ENCODE measurements at regions of chr12 and their contacts with region 1.

Region 1: GRCh38 chr12:10673660-10674384 is at the start of gene STYK1:
- DNase-seq: peak; percentile 86
- H3K4me3 Mint-ChIP-seq: peak within 1 kb of the TSS; percentile 68
- H3K27ac Mint-ChIP-seq: no peak within 1 kb of the TSS
- H3K4me1 Mint-ChIP-seq: peaks cover 20% of the 10 kb centered on the region
- H3K27me3 Mint-ChIP-seq: peaks cover 34% of the 10 kb centered on the region
- total RNA-seq, gene STYK1: not detected

Region 2: DNA sequence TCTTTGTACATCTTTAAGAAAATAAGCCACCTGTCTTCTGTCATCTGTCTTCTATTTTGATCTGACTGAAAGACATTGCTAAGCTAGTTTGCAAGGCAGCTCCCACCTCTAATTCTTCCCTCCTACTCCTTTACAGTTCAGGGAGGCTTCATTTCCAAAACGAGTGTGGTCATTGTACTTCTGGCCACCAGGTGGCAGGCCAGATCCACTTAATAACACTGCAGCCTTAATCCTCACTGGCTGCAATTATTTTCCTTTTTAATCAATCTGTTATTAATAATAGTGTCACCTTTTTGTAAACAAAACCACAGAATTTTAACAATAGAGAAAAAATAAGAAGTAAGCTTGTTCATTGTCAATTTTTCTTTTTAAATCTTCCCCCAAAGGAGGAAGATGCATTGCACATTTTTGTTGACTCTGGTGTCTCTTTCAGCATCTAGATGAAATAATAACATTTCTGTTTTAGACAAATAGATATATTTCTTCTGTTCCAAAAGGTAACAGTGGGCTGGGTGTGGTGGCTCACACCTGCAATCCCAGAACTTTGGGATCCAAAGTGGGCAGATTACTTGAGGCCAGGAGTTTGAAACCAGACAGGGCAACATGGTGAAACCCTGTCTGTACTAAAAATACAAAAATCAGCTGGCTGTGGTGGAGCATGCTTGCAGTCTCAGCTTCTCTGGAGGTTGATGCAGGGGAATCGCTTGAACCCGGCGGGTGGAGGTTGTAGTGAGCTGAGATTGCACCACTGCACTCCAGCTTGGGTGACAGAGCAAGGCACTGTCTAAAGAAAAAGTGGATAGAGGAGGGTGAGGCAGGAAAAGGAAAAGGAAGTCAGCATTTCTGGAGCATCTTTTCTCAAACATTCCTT is 437.8 kb before region 1 on chr12:
- CTCF ChIA-PET with region 1: interaction called, 3 read pairs
- intact Hi-C with region 1: loop called (anchors 1 kb)
- DNase-seq: peak; percentile 43
- H3K4me3 Mint-ChIP-seq: no peak overlapping the region
- H3K27ac Mint-ChIP-seq: no peak overlapping the region
- H3K4me1 Mint-ChIP-seq: no peaks in the 10 kb centered on the region
- H3K27me3 Mint-ChIP-seq: no peaks in the 10 kb centered on the region

Region 3: GRCh38 chr12:10331642-10332239 is 342.1 kb before region 1 on chr12:
- CTCF ChIA-PET with region 1: no interaction called
- intact Hi-C with region 1: loop called (anchors 1 kb)
- DNase-seq: no peak
- H3K4me3 Mint-ChIP-seq: no peak overlapping the region
- H3K27ac Mint-ChIP-seq: no peak overlapping the region
- H3K4me1 Mint-ChIP-seq: no peaks in the 10 kb centered on the region
- H3K27me3 Mint-ChIP-seq: peaks cover 4% of the 10 kb centered on the region

Region 4: DNA sequence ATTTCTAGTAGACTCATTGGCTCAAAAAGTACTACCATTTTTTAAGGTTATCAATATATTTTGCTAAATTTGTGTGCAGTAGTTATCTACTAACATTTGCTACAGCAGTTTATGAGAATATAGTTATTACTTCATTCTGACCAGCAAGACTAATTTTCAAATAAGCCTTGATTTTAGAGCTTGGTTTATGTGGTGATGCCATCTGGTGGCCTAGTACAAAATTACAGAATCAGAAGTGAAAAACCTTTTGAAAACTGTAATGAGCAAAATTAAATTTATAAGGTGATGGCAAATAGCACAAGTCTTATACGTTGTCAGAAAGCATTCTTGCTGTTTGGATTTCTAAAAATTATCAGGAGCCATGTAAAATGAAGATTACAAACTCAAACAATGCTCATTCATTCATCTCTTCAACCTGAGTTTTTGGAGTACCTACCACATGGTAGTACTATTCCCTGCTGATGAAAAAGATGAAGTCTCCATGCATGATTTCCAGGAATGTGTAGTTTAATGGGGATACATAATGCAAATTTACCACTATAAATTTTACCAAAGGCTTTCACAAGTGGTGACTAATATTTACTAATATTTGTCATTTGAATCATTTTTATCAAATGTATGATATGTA is 111.4 kb before region 1 on chr12:
- CTCF ChIA-PET with region 1: no interaction called
- intact Hi-C with region 1: loop called (anchors 1 kb)
- DNase-seq: peak; percentile 36
- H3K4me3 Mint-ChIP-seq: no peak overlapping the region
- H3K27ac Mint-ChIP-seq: no peak overlapping the region
- H3K4me1 Mint-ChIP-seq: peaks cover 5% of the 10 kb centered on the region
- H3K27me3 Mint-ChIP-seq: peaks cover 15% of the 10 kb centered on the region

Region 5: DNA sequence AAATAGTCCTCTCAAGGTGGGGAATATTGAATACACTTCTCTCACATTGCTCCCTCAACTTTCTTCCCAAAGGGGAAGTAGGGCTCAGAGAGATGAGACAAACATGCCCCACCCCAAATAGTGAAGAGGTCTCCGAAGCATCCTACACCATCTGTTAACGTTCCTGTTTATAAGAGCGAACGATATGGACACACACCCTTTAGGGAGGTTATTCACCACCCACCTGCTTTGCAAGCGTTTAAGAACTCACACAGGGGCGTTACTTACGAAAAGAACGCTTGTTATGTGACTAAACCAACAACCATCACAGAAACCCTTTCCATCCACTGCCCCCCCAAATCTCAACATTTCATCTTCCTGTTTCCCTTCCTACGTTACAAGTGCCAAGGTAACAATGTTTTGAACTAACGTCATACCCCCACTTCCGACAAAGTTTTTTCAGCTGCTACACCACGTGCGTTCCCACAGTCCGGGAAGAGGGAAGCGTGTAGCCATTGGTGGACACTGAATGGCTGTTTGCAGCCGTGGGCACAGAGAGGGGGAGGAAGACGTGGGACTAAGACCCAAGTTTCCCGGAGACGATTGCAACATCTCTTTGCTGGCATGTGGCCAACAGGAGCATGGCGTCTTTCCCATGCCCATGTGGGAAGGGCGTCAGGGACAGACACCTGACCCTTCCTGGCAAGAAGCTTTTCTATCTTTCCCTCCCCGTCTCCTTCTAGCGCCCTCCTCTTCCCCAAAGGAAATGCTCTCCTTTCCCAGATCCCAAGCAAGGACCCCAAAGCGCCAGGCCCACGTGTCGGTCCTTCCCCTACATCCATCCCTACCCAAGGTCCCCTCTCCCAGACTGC is 48.1 kb after region 1 on chr12:
- CTCF ChIA-PET with region 1: no interaction called
- intact Hi-C with region 1: loop called (anchors 1 kb)
- DNase-seq: peak; percentile 77
- H3K4me3 Mint-ChIP-seq: peak overlapping the region; percentile 95
- H3K27ac Mint-ChIP-seq: peak overlapping the region; percentile 94
- H3K4me1 Mint-ChIP-seq: peaks cover 30% of the 10 kb centered on the region
- H3K27me3 Mint-ChIP-seq: peaks cover 31% of the 10 kb centered on the region